IMR-90 (cell line): ENCODE measurements at regions of chr10 and their contacts with region 1.

Region 1: DNA sequence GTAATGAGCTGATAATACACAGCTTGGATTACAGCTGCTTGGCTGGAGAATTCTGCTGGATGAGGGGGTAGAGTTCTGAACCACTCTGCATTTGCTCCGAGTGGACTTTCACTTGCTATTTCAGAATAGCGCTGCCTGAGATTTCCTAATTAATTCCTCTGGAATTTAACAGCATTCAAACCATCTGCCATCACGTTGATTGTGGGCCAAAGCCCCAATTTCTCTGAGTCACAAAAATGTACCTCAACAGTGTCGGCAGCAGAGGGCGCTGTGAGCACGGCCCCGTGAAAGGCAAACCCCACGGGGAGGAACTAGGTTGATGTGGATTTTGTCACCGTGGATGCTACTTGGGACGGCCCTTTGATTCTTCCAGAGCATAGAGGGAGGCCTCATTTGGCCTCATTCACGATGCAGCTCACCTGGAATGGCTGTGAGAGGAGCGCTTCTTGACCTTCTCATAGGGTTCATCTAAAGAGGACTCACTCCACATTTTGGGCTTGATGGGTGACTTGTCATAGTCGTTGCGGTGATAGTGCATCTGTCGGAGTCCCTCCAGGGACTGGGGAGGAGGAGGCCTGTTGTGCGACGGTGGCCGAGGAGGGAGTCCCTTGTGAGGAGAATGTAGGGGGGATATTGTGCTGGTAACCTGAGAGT is 73.3 kb downstream of the PRPF18 start:
- DNase-seq: peak; percentile 50
- ATAC-seq: peak; percentile 81
- H3K4me3 ChIP-seq: no peak overlapping the region
- H3K27ac ChIP-seq: peak overlapping the region; percentile 18; the same call in 1 of the 2 replicates
- H3K4me1 ChIP-seq: peaks cover 14% of the 10 kb centered on the region
- H3K27me3 ChIP-seq: no peaks in the 10 kb centered on the region
- CTCF ChIP-seq: peak; percentile 82
- POLR2A ChIP-seq: no peak
- RAD21 ChIP-seq: peak; percentile 92

Region 2: GRCh38 chr10:13613519-13613918 is 46.5 kb before region 1 on chr10:
- CTCF ChIA-PET with region 1: interaction called, 3 read pairs
- POLR2A ChIA-PET with region 1: no interaction called
- dilution Hi-C with region 1: no loop called
- in situ Hi-C with region 1: no loop called
- intact Hi-C with region 1: loop called (anchors 1 kb)
- DNase-seq: peak; percentile 68
- ATAC-seq: peak; percentile 50
- H3K4me3 ChIP-seq: no peak overlapping the region
- H3K27ac ChIP-seq: no peak overlapping the region
- H3K4me1 ChIP-seq: peaks cover 8% of the 10 kb centered on the region; the same call in 1 of the 2 replicates
- H3K27me3 ChIP-seq: no peaks in the 10 kb centered on the region
- CTCF ChIP-seq: peak; percentile 63
- POLR2A ChIP-seq: no peak
- RAD21 ChIP-seq: peak; percentile 72

Region 3: GRCh38 chr10:13707156-13707881 is 47.3 kb after region 1 on chr10:
- CTCF ChIA-PET with region 1: no interaction called
- POLR2A ChIA-PET with region 1: no interaction called
- dilution Hi-C with region 1: no loop called
- in situ Hi-C with region 1: no loop called
- intact Hi-C with region 1: loop called (anchors 5 kb)
- DNase-seq: peak; percentile 95
- ATAC-seq: peak; percentile 89
- H3K4me3 ChIP-seq: peak overlapping the region; percentile 57
- H3K27ac ChIP-seq: peak overlapping the region; percentile 85
- H3K4me1 ChIP-seq: peaks cover 22% of the 10 kb centered on the region
- H3K27me3 ChIP-seq: no peaks in the 10 kb centered on the region
- CTCF ChIP-seq: no peak
- POLR2A ChIP-seq: peak; percentile 17; the same call in 1 of the 2 replicates
- RAD21 ChIP-seq: peak; percentile 20; the same call in 1 of the 2 replicates